ENCODE measurements at regions of chr9 and their contacts with region 1.

Region 1: GRCh38 chr9:71806901-71807307 is 38.6 kb upstream of the CEMIP2 start:
- DNase-seq: peak; percentile 73
- ATAC-seq: peak; percentile 99
- H3K4me3 ChIP-seq: no peak overlapping the region
- H3K27ac ChIP-seq: no peak overlapping the region
- H3K4me1 ChIP-seq: no peaks in the 10 kb centered on the region
- H3K27me3 ChIP-seq: no peaks in the 10 kb centered on the region
- CTCF ChIP-seq: peak; percentile 89 to 99 (median 93)
- POLR2A ChIP-seq: no peak
- RAD21 ChIP-seq: peak; percentile 96

Region 2: DNA sequence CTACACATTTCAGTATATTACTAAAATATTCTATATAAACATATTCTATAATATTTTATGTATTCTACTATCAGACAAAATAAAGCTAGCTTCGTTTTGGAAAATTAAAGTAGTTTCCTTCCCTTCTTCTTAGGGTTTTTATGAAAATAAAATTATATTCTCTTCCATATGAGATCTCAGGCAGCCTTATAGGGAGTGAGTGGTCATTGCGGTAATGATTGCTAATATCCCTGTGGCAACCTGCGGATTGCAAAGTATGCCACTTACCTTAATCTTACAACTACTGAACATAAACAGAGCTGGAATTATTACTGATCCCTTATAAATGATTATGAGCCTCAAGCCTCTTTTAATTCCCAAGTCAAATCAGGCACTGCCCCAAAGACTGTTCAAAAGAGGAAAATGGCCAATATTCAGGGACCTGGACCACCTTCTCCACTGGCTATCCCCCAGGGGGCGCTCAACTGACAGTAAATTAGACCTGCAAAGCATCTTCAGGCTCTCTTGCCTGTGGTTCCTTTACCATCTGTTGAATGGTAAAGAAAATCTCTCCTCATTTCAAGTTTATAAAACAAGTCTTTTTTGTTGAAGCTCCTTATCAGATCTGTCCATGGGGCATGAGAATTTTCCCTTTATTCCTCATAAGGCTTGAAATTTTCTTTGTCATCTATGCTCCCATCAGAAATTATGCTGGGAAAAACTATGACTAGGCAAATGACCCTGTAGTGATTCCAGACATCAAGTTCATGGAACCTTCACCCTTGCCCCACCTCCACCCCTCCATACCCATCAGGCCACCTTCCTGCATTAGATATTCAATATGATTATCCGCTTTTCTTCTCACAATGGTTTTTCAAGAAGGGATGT is 202.5 kb before region 1 on chr9:
- CTCF ChIA-PET with region 1: interaction called, 4 read pairs
- POLR2A ChIA-PET with region 1: no interaction called
- RAD21 ChIA-PET with region 1: no interaction called
- intact Hi-C with region 1: loop called (anchors 5 kb)
- DNase-seq: peak; percentile 37
- ATAC-seq: peak; percentile 94
- H3K4me3 ChIP-seq: no peak overlapping the region
- H3K27ac ChIP-seq: no peak overlapping the region
- H3K4me1 ChIP-seq: no peaks in the 10 kb centered on the region
- H3K27me3 ChIP-seq: no peaks in the 10 kb centered on the region
- CTCF ChIP-seq: peak; percentile 81 to 83 (median 82)
- POLR2A ChIP-seq: no peak
- RAD21 ChIP-seq: peak; percentile 81

Region 3: DNA sequence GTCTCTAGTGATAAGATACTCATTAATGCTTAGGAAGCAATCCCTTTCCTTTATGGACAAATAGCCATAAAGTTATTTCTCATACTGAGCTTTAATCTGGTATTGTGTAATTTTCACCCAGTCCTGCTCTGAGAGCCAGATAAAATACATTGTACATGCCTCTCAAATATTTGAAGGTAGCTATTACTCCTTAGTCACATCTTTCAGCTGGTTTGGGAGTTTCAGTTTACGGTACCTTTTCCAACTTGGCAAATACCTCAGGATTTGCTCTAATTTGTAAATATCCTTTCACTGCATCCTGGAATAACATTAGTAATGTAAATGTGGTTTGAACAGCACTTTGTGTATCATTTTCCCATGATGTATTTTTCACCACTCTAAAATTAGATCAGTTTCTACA is 56.7 kb after region 1 on chr9:
- CTCF ChIA-PET with region 1: no interaction called
- POLR2A ChIA-PET with region 1: no interaction called
- RAD21 ChIA-PET with region 1: no interaction called
- intact Hi-C with region 1: loop called (anchors 10 kb)
- DNase-seq: no peak
- ATAC-seq: no peak
- H3K4me3 ChIP-seq: no peak overlapping the region
- H3K27ac ChIP-seq: no peak overlapping the region
- H3K4me1 ChIP-seq: no peaks in the 10 kb centered on the region
- H3K27me3 ChIP-seq: no peaks in the 10 kb centered on the region
- CTCF ChIP-seq: no peak
- POLR2A ChIP-seq: no peak
- RAD21 ChIP-seq: no peak